Activated naive CD4-positive, alpha-beta T cell treated with anti-CD3 and anti-CD28 coated beads for 36 hours (primary cell): ENCODE measurements at regions of chr3 and their contacts with region 1.

Region 1: GRCh38 chr3:143119009-143119914 is at the start of gene CHST2:
- DNase-seq: peak; percentile 76
- H3K4me3 Mint-ChIP-seq: peak within 1 kb of the TSS; percentile 84
- H3K27ac Mint-ChIP-seq: no peak within 1 kb of the TSS
- H3K4me1 Mint-ChIP-seq: peaks cover 31% of the 10 kb centered on the region
- H3K27me3 Mint-ChIP-seq: no peaks in the 10 kb centered on the region
- total RNA-seq, gene CHST2: 4.2 to 4.4 TPM

Region 2: DNA sequence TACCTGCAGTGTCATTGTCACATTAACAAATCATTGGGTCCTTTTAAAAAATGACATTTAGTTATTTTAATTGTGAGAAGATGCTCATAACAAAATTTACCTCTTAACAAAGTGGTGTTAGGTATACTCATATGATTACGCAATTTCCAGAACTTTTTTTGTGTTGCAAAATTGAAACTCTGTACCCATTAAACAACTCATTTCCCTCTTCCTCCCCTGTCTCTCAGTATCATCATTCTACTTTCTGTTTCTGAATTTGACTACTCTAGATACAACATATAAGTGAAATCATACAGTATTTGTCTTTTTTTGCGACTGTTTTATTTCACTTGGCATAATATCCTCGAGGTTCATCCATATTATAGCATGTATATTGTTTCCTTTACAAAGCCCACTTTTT is 58.4 kb before region 1 on chr3:
- CTCF ChIA-PET with region 1: interaction called, 6 read pairs
- intact Hi-C with region 1: loop called (anchors 1 kb)
- DNase-seq: no peak
- H3K4me3 Mint-ChIP-seq: no peak overlapping the region
- H3K27ac Mint-ChIP-seq: no peak overlapping the region
- H3K4me1 Mint-ChIP-seq: peaks cover 27% of the 10 kb centered on the region
- H3K27me3 Mint-ChIP-seq: no peaks in the 10 kb centered on the region

Region 3: DNA sequence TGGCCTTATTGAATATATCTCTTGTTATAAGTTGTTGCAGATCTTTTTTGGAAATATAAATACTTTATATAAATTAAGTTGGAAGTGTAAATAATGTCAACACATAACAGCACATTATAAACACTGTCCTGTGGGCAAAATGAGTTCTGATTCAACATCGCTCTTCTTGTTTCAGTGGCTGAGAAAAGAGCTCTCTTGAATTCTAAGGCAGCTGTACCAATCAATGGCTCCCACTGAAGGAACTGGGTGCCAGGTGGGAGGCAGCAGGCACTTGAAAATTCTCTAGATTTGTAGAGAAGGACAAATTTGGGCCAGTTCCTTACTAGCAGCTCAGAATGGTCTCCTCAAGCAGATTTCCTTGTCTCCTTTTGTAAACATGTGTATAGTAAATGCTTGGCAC is 45.9 kb after region 1 on chr3:
- CTCF ChIA-PET with region 1: interaction called, 4 read pairs
- intact Hi-C with region 1: loop called (anchors 1 kb)
- DNase-seq: no peak
- H3K4me3 Mint-ChIP-seq: no peak overlapping the region
- H3K27ac Mint-ChIP-seq: peak overlapping the region; percentile 88
- H3K4me1 Mint-ChIP-seq: peaks cover 73% of the 10 kb centered on the region
- H3K27me3 Mint-ChIP-seq: no peaks in the 10 kb centered on the region

Region 4: DNA sequence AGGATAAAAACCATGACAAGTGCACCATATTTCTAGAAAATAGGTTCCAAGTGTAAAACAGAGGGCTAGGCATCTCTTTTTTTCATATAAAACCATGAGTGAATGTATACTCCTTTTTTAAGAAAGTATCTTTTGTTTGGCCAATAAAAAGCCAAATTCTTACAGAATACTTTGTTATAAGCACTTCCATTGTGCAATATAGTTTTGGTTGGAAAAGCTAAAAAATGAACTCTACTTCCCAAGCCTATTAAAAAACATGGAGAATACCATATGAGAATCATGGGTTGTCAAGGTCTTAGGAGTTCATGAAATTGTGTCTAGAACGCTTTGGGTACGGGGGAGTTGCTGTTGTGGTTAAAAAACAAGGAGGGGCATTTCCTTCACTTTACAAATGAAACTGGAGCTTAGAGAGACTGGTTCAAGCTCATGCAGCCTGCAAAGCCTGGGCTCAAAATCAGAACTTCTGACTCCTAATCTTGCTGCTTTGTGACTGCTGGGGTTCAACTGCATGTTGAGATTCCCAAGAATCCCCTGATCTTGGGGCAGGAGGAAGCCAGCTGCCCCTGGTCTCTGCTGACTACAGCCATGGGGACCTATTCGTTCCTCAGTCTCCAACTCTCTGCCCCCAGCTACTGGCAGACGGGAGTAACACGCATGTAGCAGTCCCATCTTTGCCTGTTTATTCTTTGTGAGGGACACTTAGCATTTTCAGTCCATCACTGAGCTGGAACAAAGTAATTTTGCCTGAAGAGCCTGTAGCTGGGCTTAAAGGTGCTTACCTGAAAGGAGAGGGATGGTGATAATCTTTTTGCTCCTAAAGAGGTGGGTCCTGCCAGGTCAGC is 229.4 kb after region 1 on chr3:
- CTCF ChIA-PET with region 1: interaction called, 5 read pairs
- intact Hi-C with region 1: loop called (anchors 1 kb)
- DNase-seq: no peak
- H3K4me3 Mint-ChIP-seq: no peak overlapping the region
- H3K27ac Mint-ChIP-seq: no peak overlapping the region
- H3K4me1 Mint-ChIP-seq: peaks cover 35% of the 10 kb centered on the region
- H3K27me3 Mint-ChIP-seq: no peaks in the 10 kb centered on the region

Region 5: GRCh38 chr3:143644370-143645089 is 525.3 kb after region 1 on chr3:
- CTCF ChIA-PET with region 1: interaction called, 3 read pairs
- intact Hi-C with region 1: loop called (anchors 1 kb)
- DNase-seq: peak; percentile 48
- H3K4me3 Mint-ChIP-seq: no peak overlapping the region
- H3K27ac Mint-ChIP-seq: no peak overlapping the region
- H3K4me1 Mint-ChIP-seq: no peaks in the 10 kb centered on the region
- H3K27me3 Mint-ChIP-seq: no peaks in the 10 kb centered on the region

Region 6: DNA sequence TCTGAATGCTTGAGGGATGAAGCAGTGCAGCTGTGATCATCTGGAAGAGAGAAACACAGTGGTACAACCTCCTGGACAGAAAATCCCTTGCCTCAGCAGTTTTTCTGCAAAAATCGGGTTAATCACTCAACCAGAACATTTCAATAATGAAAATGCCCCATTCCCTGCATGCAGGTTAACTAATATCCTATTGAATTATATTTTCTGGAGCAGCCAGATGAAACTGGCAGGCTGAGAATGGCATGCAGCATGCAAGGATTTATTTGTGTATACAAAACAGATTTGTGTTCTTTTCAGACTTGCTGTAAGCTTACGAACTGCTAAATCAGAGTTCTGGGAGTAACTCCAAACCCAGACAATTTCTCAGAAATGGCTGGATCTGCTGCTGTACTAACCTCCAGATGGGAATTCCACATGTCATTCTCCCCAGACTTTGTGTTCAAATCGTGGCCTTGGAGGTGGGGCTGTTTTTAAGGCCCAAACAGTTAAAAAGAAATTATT is 689.9 kb after region 1 on chr3:
- CTCF ChIA-PET with region 1: no interaction called
- intact Hi-C with region 1: no loop called
- DNase-seq: no peak
- H3K4me3 Mint-ChIP-seq: no peak overlapping the region
- H3K27ac Mint-ChIP-seq: no peak overlapping the region
- H3K4me1 Mint-ChIP-seq: peaks cover 5% of the 10 kb centered on the region
- H3K27me3 Mint-ChIP-seq: no peaks in the 10 kb centered on the region